GM13976 (cell line): ENCODE measurements at regions of chr18 and their contacts with region 1.

Region 1: DNA sequence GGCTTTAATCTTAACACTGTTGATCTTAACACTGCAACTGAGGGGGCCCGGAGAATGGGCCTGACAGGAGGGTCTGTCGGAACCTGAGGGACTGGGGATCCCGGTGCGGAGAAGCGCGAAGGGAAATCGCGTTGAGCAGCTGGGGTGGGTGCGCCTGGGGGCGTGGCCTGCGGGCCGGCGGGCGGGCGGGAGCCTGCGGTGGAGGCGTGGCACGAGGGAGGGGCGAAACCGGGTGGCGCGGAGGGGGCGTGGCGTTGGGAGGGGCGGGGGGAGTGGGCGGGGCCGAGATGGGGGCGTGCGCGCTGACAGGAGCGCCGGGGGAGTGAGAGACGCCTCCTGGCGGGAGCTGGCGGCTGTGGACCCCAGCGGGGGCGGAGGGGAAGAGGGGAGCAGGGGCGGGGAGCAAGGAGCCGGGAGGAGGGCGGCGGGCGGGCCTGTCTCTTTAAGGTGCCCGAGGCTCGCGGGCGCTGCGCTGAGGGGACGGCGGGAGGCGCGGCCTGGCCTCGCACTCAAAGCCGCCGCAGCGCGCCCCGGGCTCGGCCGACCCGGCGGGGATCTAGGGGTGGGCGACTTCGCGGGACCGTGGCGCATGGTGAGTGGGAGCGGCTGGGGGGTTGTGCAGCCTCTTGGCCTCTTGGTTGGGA is at the start of gene TWSG1:
- DNase-seq: peak; percentile 99
- CTCF ChIP-seq: peak; percentile 47

Region 2: GRCh38 chr18:9079818-9080528 is 254.5 kb before region 1 on chr18:
- in situ Hi-C with region 1: loop called (anchors 10 kb)
- DNase-seq: no peak
- CTCF ChIP-seq: no peak

Region 3: GRCh38 chr18:9488538-9488937 is 154.1 kb after region 1 on chr18:
- in situ Hi-C with region 1: no loop called
- DNase-seq: no peak
- CTCF ChIP-seq: no peak

Region 4: DNA sequence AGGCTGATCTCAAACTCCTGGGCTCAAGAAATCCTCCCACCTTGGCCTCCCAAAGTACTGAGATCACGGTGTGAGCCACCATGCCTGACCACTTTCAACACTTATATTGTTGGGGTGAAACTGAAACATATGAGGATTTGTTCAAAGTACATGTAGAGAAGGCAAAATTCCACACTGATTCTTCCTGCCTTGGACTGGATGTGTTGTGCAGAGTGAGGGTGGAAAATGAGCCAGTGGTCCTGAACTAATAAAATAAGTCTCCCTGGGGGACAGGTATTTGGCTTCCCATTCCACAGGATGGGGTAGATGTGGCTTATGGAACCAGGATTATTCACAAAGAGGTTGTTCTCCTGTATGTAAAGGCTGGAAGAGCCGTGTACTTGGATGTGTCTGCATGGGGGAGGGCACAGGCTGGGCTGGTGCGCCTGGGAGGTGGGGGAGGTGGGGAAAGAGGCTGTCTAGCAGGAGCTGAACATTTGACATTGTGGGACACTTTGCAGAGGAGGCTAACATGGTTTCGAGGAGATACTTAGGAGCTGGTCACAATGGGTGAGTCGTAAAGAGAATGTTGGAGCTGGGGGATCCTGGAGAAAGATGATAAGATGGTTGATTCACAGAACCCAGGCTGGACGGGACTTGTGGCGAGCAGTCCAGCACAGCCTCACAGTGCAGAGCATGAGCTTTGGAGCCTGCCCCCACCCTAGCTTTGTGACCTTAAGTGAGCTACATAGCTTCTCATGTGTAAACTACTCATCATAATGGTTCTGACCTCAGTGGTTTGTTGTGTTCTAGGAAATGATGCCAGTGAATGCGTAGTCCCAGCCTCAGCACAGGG is 550.9 kb after region 1 on chr18 and contains the start of gene TXNDC2:
- in situ Hi-C with region 1: no loop called
- DNase-seq: no peak
- CTCF ChIP-seq: no peak